ENCODE measurements at regions of chr4 and their contacts with region 1.

Region 1: DNA sequence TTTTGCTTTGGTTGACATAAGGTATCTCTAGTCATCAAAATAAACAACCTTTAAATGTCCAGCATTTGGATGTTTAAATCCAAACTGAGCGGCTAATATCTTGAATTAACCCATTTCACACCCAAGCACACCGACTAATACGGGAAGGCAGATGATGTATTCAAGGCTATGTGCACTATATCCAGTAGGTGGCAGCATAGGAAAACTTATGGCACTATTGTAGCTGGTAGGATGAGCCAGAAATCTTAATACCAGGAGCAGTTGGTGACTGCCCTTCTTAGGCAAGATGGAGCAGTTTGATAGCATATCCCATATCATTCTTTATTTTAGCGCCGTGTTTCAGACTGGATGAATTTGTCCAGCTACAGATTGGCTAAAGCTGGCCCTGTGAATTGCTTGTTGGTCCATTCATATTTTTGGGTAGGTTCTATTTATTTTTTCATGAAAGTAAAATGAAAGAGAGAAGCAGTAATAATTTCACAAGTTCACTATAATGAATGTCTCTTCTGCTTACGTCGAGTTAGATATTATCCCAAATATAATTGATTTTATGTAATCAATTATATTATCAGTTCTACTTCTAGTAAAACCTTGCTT is 24.4 kb downstream of the UCHL1 start:
- DNase-seq: peak; percentile 64
- ATAC-seq: peak; percentile 98
- H3K4me3 ChIP-seq: no peak overlapping the region
- H3K27ac ChIP-seq: no peak overlapping the region
- H3K4me1 ChIP-seq: no peaks in the 10 kb centered on the region
- H3K27me3 ChIP-seq: no peaks in the 10 kb centered on the region; a peak in 1 of 5 replicates
- CTCF ChIP-seq: peak; percentile 91
- EP300 ChIP-seq: no peak
- POLR2A ChIP-seq: no peak
- RAD21 ChIP-seq: peak; percentile 86

Region 2: DNA sequence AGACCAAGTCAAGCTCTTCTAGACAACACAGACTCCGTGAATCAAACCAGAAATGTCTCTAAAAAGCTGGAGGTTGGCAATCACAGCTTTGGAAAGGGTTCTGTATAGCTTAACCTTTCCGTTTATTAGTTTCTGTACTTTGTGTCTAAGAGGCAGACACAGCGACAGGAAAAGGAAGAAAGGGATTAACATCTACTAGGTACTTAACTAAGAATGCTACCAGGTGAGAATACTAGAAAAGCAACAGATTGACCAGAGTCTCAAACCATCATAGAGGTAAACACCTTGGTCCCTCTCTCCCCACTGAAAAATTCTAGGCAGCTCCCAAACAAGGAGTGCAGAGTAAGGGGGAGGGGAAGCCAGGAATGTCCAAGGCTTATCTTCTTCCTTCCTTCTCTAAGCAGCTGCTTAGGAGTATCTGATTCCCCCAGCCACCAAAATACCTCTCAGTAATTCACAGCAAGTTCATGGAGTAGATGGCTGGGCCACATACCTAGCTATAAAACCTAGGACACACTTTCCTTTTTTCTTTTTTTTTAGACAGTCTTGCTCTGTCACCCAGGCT is 147.6 kb before region 1 on chr4:
- CTCF ChIA-PET with region 1: no interaction called
- POLR2A ChIA-PET with region 1: no interaction called
- in situ Hi-C with region 1: no loop called
- intact Hi-C with region 1: no loop called
- DNase-seq: no peak
- ATAC-seq: no peak
- H3K4me3 ChIP-seq: no peak overlapping the region
- H3K27ac ChIP-seq: no peak overlapping the region
- H3K4me1 ChIP-seq: peaks cover 74% of the 10 kb centered on the region
- H3K27me3 ChIP-seq: no peaks in the 10 kb centered on the region
- CTCF ChIP-seq: no peak
- EP300 ChIP-seq: no peak
- POLR2A ChIP-seq: no peak
- RAD21 ChIP-seq: no peak

Region 3: DNA sequence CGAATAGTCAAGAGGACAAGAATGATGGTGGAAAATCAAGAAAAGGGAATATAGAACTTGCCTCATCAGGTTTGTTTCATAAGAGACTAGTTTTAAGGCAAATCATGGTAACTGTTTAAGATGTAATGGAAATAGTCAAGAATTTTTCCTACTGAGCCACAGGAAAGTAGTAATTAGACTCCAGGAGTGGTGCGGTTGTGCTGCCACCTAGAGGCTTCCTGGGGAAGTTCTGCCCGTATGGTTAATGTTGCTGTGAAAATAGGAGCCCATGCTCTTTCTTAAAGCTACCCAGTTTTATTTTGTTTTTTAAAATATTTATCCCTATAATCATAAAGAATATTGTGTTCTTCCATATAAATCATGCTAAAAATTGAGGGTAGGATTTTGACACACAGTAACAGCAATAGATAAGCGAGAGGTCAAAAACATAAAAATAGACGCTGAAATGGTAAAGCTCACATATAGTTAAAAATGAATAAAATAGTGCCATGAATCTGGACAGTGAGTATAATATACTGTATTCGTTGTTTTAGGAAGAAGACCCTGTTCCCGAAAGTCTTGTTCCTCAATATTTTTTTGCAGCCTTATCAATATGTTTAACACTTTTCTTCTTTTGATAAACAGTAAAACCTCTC is 380.4 kb after region 1 on chr4:
- CTCF ChIA-PET with region 1: interaction called, 38 read pairs
- POLR2A ChIA-PET with region 1: no interaction called
- in situ Hi-C with region 1: no loop called
- intact Hi-C with region 1: loop called (anchors 1 kb)
- DNase-seq: peak; percentile 12
- ATAC-seq: peak; percentile 71
- H3K4me3 ChIP-seq: no peak overlapping the region
- H3K27ac ChIP-seq: no peak overlapping the region
- H3K4me1 ChIP-seq: no peaks in the 10 kb centered on the region
- H3K27me3 ChIP-seq: peaks cover 0 to 9% of the 10 kb centered on the region in 2 experiments; a peak in 3 of 5 replicates
- CTCF ChIP-seq: peak; percentile 74
- EP300 ChIP-seq: no peak
- POLR2A ChIP-seq: no peak
- RAD21 ChIP-seq: no peak

Region 4: DNA sequence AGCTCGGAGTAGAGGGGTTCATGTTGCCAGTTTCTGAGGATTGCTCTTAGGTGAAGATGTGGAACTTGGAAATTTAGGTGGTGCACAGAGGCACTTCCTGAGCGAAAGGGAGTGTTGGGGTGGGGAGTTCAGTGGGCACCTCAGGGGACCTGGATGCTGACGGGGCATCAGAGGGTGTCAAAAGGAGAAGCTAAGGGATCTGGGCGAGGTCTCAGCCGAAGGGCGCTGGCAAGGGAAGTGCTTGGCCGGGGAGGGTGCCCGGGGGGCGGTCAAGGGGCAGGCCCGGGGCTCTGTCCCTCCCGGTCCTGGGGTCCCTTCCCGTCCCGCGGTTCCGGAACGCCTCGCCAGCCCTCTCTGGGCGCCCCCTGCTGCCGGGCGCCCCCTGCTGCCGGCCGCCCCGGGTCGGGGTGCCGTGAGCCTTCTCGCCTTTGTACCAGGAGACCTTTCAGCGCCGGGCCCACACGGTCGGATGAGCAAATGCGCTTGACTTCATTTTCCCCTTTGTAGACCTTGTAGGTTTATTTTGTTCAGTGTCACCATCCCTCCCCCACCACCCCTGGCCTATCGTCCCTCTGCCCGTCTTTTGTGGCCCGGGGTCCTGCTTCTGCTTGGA is 470.4 kb after region 1 on chr4:
- CTCF ChIA-PET with region 1: no interaction called
- POLR2A ChIA-PET with region 1: no interaction called
- in situ Hi-C with region 1: no loop called
- intact Hi-C with region 1: loop called (anchors 5 kb)
- DNase-seq: no peak
- ATAC-seq: peak; percentile 95
- H3K4me3 ChIP-seq: no peak overlapping the region
- H3K27ac ChIP-seq: no peak overlapping the region
- H3K4me1 ChIP-seq: no peaks in the 10 kb centered on the region
- H3K27me3 ChIP-seq: peaks cover 1 to 46% of the 10 kb centered on the region in 2 experiments; a peak in 4 of 5 replicates
- CTCF ChIP-seq: peak; percentile 47
- EP300 ChIP-seq: no peak
- POLR2A ChIP-seq: no peak
- RAD21 ChIP-seq: peak; percentile 45; the same call in 1 of the 2 replicates

Region 5: GRCh38 chr4:41887821-41888686 is 606.9 kb after region 1 on chr4:
- CTCF ChIA-PET with region 1: interaction called, 7 read pairs
- POLR2A ChIA-PET with region 1: no interaction called
- in situ Hi-C with region 1: no loop called
- intact Hi-C with region 1: loop called (anchors 1 kb)
- DNase-seq: peak; percentile 23
- ATAC-seq: no peak
- H3K4me3 ChIP-seq: no peak overlapping the region
- H3K27ac ChIP-seq: no peak overlapping the region
- H3K4me1 ChIP-seq: peaks cover 16% of the 10 kb centered on the region
- H3K27me3 ChIP-seq: no peaks in the 10 kb centered on the region
- CTCF ChIP-seq: peak; percentile 65
- EP300 ChIP-seq: no peak
- POLR2A ChIP-seq: no peak
- RAD21 ChIP-seq: no peak

Region 6: DNA sequence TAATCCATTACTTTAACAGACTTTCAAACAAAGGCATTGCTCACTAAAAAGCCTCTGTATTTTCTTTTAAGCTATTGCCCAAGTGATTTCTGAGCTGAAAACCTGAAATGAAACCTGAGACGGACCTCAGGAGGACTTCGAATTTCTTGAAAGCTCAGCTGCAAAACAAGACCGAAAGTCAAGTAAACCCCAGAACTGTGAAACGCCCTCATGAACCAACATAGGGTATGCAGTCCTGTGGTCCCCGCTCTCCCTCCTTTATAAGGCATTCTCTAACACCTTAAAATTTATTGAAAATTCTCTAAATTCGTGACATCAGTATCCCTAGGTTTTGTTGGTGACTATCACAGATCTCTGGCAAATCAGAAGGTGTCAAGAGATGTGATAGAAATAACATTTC is 1208.0 kb after region 1 on chr4:
- CTCF ChIA-PET with region 1: no interaction called
- POLR2A ChIA-PET with region 1: no interaction called
- in situ Hi-C with region 1: no loop called
- intact Hi-C with region 1: no loop called
- DNase-seq: no peak
- ATAC-seq: no peak
- H3K4me3 ChIP-seq: no peak overlapping the region
- H3K27ac ChIP-seq: no peak overlapping the region
- H3K4me1 ChIP-seq: peaks cover 8% of the 10 kb centered on the region; the same call in 1 of the 2 replicates
- H3K27me3 ChIP-seq: no peaks in the 10 kb centered on the region
- CTCF ChIP-seq: no peak
- EP300 ChIP-seq: no peak
- POLR2A ChIP-seq: no peak
- RAD21 ChIP-seq: no peak